ENCODE measurements at regions of chr9 and their contacts with region 1.

Region 1: DNA sequence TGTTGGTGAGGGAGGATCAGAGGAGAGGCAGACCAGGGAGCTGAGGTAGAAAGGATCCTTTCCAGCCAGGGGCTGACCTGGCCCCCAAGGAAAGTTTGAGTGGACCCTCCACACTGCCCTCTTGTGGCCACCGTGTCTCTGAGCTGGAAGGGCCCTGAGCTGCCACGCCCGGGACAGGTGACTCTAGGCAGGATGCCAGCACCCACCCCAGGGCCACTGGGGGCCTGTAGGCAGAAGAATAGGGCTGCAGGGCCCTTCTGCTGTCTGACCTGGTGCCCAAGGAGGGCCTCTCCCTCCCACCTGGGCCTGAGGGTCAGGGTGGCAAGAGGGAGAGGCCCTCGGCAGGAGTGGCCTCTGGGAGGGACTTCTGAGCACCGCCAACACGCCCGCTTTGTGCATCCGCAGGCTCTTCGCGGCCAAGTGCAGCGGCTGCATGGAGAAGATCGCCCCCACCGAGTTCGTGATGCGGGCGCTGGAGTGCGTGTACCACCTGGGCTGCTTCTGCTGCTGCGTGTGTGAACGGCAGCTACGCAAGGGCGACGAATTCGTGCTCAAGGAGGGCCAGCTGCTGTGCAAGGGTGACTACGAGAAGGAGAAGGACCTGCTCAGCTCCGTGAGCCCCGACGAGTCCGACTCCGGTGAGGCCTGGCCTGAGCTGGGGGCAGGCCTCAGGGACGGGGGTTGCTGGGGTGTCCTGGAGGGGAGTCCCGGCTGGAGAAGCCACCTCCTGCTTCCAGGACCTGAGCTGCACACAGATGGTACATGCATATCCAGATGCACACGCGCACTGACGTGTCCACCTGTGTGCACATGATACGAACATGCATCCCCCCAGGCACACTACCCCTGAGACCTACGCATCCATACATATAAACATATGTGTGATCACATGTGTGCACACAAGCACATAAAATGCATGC is 77.0 kb downstream of the LMX1B start:
- DNase-seq: peak; percentile 66 to 81 (median 80)
- ATAC-seq: peak; percentile 92
- H3K4me3 ChIP-seq: no peak overlapping the region
- H3K27ac ChIP-seq: no peak overlapping the region
- H3K4me1 ChIP-seq: peaks cover 0 to 14% of the 10 kb centered on the region in 2 experiments; a peak in 2 of 5 replicates
- H3K27me3 ChIP-seq: peaks cover 17 to 66% of the 10 kb centered on the region in 2 experiments; a peak in 4 of 5 replicates
- CTCF ChIP-seq: peak; percentile 64 to 78 (median 72)
- EP300 ChIP-seq: no peak
- POLR2A ChIP-seq: no peak
- RAD21 ChIP-seq: peak in 1 of 2 experiments; percentile 52; a peak in 2 of 4 replicates

Region 2: GRCh38 chr9:126604059-126605055 is 86.3 kb before region 1 on chr9:
- CTCF ChIA-PET with region 1: no interaction called
- POLR2A ChIA-PET with region 1: no interaction called
- in situ Hi-C with region 1: loop called (anchors 5 kb)
- intact Hi-C with region 1: no loop called
- DNase-seq: no peak
- ATAC-seq: no peak
- H3K4me3 ChIP-seq: no peak overlapping the region
- H3K27ac ChIP-seq: no peak overlapping the region
- H3K4me1 ChIP-seq: no peaks in the 10 kb centered on the region
- H3K27me3 ChIP-seq: peaks cover 0 to 44% of the 10 kb centered on the region in 2 experiments; a peak in 4 of 5 replicates
- CTCF ChIP-seq: no peak
- EP300 ChIP-seq: no peak
- POLR2A ChIP-seq: no peak
- RAD21 ChIP-seq: no peak

Region 3: DNA sequence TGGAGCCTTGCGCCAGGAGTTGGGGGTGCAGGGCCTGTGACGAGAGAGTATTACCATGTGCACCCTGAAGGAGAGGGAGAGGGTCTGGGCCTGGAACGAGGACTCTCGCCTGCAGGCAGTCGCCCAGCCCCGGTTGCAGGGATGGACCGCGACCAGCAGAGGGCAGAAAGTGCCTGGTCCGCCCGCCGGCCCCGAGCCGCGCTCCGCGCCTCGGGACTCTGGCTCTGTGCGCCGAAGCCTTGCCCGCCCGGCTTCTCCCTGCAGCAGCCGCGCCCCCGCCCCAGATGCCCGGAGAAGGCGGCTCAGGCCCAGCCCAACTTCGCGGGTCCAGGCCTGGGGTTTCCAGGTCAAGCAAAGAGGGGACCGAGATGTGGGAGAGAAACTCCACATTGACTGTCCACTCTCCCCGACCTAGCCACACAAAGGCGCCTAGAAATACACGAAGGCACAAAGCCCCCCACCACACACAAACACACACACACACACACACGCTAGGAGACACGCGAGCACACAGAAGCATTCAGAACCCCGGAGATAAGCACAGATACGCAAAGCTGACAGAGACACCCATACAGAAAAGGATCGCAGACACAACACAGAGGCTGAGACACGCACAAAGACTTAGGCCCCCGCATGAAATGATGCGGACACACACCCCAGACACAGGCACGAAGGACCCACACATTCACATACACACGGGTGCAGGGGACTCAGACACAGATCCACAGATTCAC is 78.9 kb before region 1 on chr9:
- CTCF ChIA-PET with region 1: no interaction called
- POLR2A ChIA-PET with region 1: interaction called, 3 read pairs
- in situ Hi-C with region 1: loop called (anchors 5 kb)
- intact Hi-C with region 1: loop called (anchors 5 kb)
- DNase-seq: peak; percentile 69 to 84 (median 79)
- ATAC-seq: peak; percentile 98
- H3K4me3 ChIP-seq: no peak overlapping the region
- H3K27ac ChIP-seq: no peak overlapping the region; the same call in 2 of the 3 replicates
- H3K4me1 ChIP-seq: peaks cover 0 to 27% of the 10 kb centered on the region in 2 experiments; a peak in 1 of 5 replicates
- H3K27me3 ChIP-seq: peaks cover 15 to 72% of the 10 kb centered on the region in 2 experiments; a peak in 4 of 5 replicates
- CTCF ChIP-seq: peak; percentile 67 to 84 (median 75)
- EP300 ChIP-seq: no peak
- POLR2A ChIP-seq: no peak
- RAD21 ChIP-seq: peak; percentile 42 to 74